Heart right ventricle (tissue), 16 donors: ENCODE measurements at regions of chr11 and their contacts with region 1.

Region 1: GRCh38 chr11:75717608-75718418 is at the start of gene MOGAT2:
- DNase-seq: no peak
- ATAC-seq: peak; percentile 54 to 91 (median 73)
- H3K4me3 ChIP-seq: no peak within 1 kb of the TSS
- H3K27ac ChIP-seq: no peak within 1 kb of the TSS
- H3K4me1 ChIP-seq: peaks cover 0 to 30% (median 0%) of the 10 kb centered on the region in 9 donors
- H3K27me3 ChIP-seq: no peaks in the 10 kb centered on the region
- CTCF ChIP-seq: no peak
- total RNA-seq, gene MOGAT2: 0.13 to 0.35 (median 0.20) TPM in 4 of 10 donors, not detected in the others

Region 2: DNA sequence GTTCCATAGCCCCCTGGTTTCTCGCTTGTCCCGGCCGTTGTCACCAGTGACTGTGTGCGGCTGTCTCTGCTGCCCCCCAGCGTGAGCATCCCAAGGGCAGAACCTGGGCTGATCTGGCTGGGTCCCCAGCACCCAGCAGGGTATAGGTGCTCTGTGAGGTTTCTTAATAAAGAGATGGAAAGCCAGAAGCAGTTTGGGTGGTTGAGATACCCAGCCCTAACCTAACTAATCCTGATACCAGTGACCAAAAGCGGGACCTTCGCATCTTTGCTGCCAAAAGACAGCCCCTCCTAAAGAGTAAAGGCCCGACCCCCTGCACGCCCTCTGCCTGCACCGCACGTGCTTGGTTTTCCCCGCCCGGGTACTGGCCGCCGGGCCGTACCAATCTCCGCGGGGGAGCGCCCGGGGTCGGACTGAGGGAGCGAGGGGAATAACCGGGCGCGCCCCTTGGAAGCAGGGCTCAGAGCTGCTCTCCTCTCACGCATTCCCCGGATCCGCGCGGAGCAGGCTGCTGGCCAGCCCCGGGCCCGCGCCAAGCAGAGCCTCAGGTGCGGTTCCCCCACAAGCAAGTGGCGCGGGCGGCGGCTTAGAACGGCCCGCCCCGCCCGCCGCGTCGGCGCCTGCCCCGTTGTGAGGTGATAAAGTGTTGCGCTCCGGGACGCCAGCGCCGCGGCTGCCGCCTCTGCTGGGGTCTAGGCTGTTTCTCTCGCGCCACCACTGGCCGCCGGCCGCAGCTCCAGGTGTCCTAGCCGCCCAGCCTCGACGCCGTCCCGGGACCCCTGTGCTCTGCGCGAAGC is 50.5 kb after region 1 on chr11 and contains the start of gene DGAT2:
- intact Hi-C with region 1: loop called in 2 of 10 experiments (anchors 10 kb)
- DNase-seq: peak; percentile 70 to 79
- ATAC-seq: peak; percentile 88 to 93 (median 92)
- H3K4me3 ChIP-seq: peak within 1 kb of the TSS; percentile 33 to 68 (median 55)
- H3K27ac ChIP-seq: peak within 1 kb of the TSS in 8 of 10 donors; percentile 23 to 87 (median 58)
- H3K4me1 ChIP-seq: peaks cover 7 to 52% (median 16%) of the 10 kb centered on the region in 9 donors
- H3K27me3 ChIP-seq: peaks cover 0 to 30% (median 22%) of the 10 kb centered on the region in 7 donors
- CTCF ChIP-seq: peak in 8 of 9 donors; percentile 11 to 50 (median 32)
- total RNA-seq, gene DGAT2: 6.2 to 24.4 (median 10.3) TPM

Region 3: GRCh38 chr11:75867775-75868374 is 150.1 kb after region 1 on chr11:
- intact Hi-C with region 1: loop called in 4 of 10 experiments (anchors 5 to 10 kb)
- DNase-seq: peak in 1 of 2 donors; percentile 58
- ATAC-seq: peak; percentile 55 to 80 (median 68)
- H3K4me3 ChIP-seq: no peak overlapping the region
- H3K27ac ChIP-seq: no peak overlapping the region
- H3K4me1 ChIP-seq: peaks cover 5 to 34% (median 23%) of the 10 kb centered on the region in 9 donors
- H3K27me3 ChIP-seq: no peaks in the 10 kb centered on the region
- CTCF ChIP-seq: peak; percentile 72 to 89 (median 85)

Region 4: GRCh38 chr11:75873417-75874221 is 155.8 kb after region 1 on chr11:
- intact Hi-C with region 1: loop called in 4 of 10 experiments (anchors 5 to 10 kb)
- DNase-seq: no peak
- ATAC-seq: peak in 3 of 8 donors; percentile 19 to 29 (median 29)
- H3K4me3 ChIP-seq: no peak overlapping the region
- H3K27ac ChIP-seq: peak overlapping the region in 1 of 10 donors; percentile 31
- H3K4me1 ChIP-seq: peaks cover 0 to 34% (median 12%) of the 10 kb centered on the region in 9 donors
- H3K27me3 ChIP-seq: no peaks in the 10 kb centered on the region
- CTCF ChIP-seq: no peak

Region 5: GRCh38 chr11:75946531-75947530 is 229.0 kb after region 1 on chr11:
- intact Hi-C with region 1: loop called in 1 of 10 experiments (anchors 5 kb)
- DNase-seq: peak in 1 of 2 donors; percentile 44
- ATAC-seq: peak; percentile 65 to 92 (median 84)
- H3K4me3 ChIP-seq: no peak overlapping the region
- H3K27ac ChIP-seq: peak overlapping the region in 7 of 10 donors; percentile 9 to 59 (median 53)
- H3K4me1 ChIP-seq: peaks cover 0 to 47% (median 33%) of the 10 kb centered on the region in 9 donors
- H3K27me3 ChIP-seq: no peaks in the 10 kb centered on the region
- CTCF ChIP-seq: no peak

Region 6: DNA sequence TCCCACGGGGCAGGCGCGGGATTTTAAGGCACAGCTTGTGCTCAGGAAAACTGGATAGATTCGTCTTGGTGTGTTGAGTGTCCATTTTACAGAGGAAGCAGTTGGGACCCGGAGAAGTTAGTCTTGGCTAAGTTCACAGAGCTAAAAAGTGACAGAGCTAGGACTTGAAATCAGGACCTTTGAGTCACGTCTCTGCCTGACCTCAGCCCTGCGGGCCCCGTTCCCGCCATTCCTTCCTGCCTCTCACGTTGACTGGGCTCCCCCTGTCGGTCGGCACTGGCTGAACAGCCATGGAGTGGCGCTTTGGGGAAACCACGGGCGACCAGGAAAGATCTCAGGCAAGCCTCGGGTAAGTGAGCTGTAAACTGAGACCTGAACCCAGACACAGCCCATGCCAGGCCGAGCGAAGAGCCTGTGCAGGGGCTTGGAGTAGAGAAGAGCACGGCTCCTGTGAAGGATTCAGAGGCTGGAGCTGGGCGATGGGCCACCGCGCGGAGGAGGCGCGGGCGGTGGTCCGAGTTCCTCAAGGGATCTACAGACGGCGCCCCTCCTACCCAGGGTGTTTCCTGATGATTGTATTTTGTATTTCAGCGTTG is 434.4 kb after region 1 on chr11:
- intact Hi-C with region 1: loop called in 1 of 10 experiments (anchors 10 kb)
- DNase-seq: peak; percentile 90 to 93
- ATAC-seq: peak; percentile 85 to 93 (median 90)
- H3K4me3 ChIP-seq: peak overlapping the region in 9 of 10 donors; percentile 27 to 62 (median 52)
- H3K27ac ChIP-seq: peak overlapping the region in 2 of 10 donors; percentile 4 to 32
- H3K4me1 ChIP-seq: peaks cover 0 to 23% (median 16%) of the 10 kb centered on the region in 9 donors
- H3K27me3 ChIP-seq: no peaks in the 10 kb centered on the region
- CTCF ChIP-seq: peak; percentile 92 to 99 (median 97)

Region 7: DNA sequence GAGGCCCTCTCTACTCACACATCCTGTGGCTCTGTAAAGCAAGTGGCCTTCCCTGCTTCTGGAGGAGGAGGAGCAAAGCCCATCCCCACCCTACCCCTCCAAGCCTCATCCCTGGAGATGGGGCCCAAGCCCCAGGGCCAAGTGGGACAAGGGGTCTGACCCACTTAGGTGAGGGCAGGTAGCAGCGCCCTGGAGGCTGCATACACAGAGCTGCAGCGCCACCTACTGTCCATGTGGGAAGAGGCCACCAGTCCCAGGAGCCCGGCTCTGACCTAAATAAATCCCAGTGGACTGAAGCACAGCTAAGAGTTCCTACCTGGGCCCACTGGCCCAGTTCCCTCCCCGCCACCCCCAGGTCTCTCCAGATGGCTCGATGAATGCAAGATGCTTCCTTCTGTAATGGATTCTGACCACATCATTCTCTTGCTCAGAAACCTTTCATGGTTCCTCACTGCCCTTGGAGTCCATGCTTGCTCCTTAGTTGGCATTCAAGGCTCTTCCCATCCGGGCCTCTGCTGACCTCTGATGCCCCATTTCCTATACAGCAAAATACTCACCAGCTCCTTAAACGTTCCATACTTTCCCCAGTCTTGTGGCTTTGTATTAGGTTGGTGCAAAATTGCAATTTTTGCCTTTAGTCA is 601.1 kb after region 1 on chr11:
- intact Hi-C with region 1: loop called in 2 of 10 experiments (anchors 10 kb)
- DNase-seq: peak; percentile 79 to 83
- ATAC-seq: peak; percentile 83 to 94 (median 88)
- H3K4me3 ChIP-seq: no peak overlapping the region
- H3K27ac ChIP-seq: no peak overlapping the region
- H3K4me1 ChIP-seq: peaks cover 0 to 19% (median 13%) of the 10 kb centered on the region in 9 donors
- H3K27me3 ChIP-seq: peaks cover 0 to 32% (median 19%) of the 10 kb centered on the region in 7 donors
- CTCF ChIP-seq: peak; percentile 80 to 97 (median 90)